ENCODE measurements at regions of chr1 and their contacts with region 1.

Region 1: DNA sequence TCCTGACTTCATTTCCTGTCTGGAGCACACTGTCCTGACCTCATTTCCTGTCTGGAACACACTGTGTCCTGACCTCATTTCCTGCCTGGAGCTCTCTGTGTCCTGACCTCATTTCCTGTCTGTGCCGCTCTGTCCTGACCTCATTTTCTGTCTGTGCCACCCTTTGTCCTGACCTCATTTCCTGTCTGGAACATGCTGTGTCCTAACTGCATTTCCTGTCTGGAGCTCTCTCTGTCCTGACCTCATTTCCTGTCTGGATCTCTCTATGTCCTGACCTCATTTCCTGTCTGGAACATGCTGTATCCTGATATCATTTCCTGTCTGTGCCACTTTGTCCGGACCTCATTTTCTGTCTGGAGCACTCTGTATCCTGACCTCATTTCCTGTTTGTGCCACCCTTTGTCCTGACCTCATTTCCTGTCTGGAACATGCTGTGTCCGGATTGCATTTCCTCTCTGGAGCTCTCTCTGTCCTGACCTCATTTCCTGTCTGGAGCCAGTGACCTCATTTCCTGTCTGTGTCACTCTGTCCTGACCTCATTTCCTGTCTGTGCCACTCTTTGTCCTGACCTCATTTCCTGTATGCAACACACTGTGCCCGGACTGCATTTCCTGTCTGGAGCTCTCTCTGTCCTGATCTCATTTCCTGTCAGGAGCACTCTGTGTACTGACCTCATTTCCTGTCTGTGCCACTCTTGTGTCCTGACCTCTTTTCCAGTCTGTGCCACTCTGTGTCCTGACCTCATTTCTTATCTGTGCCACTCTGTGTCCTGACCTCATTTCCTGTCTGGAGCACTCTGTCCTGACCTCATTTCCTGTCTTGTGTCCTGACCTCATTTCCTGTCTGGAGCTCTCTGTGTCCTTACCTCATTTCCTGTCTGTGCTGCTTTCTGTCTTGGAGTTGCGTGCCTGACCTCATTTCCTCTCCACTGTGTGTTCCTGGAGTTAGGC is 27.6 kb downstream of the SKI start:
- DNase-seq: peak; percentile 59 to 99 (median 95)
- ATAC-seq: peak; percentile 79
- H3K4me3 ChIP-seq: peak overlapping the region; percentile 0
- H3K4me3 Mint-ChIP-seq: no peak overlapping the region
- H3K27ac ChIP-seq: peak overlapping the region; percentile 98
- H3K27ac Mint-ChIP-seq: no peak overlapping the region
- H3K4me1 ChIP-seq: peaks cover 52 to 70% of the 10 kb centered on the region in 2 donors
- H3K4me1 Mint-ChIP-seq: peaks cover 27 to 62% (median 51%) of the 10 kb centered on the region in 7 donors
- H3K27me3 ChIP-seq: no peaks in the 10 kb centered on the region
- H3K27me3 Mint-ChIP-seq: no peaks in the 10 kb centered on the region

Region 2: GRCh38 chr1:2227346-2228153 is 28.1 kb before region 1 on chr1:
- CTCF ChIA-PET with region 1: interaction called, 16 read pairs
- POLR2A ChIA-PET with region 1: interaction called, 244 read pairs
- intact Hi-C with region 1: loop called (anchors 1 kb)
- DNase-seq: peak; percentile 87 to 98 (median 97)
- ATAC-seq: peak; percentile 88
- H3K4me3 ChIP-seq: peak overlapping the region; percentile 33
- H3K4me3 Mint-ChIP-seq: peak overlapping the region in 9 of 10 donors; percentile 56 to 83 (median 69)
- H3K27ac ChIP-seq: peak overlapping the region; percentile 72
- H3K27ac Mint-ChIP-seq: peak overlapping the region in 4 of 9 donors; percentile 26 to 80 (median 62)
- H3K4me1 ChIP-seq: peaks cover 5 to 14% of the 10 kb centered on the region in 2 donors
- H3K4me1 Mint-ChIP-seq: peaks cover 9 to 24% (median 17%) of the 10 kb centered on the region in 7 donors
- H3K27me3 ChIP-seq: no peaks in the 10 kb centered on the region
- H3K27me3 Mint-ChIP-seq: peaks cover 0 to 8% (median 0%) of the 10 kb centered on the region in 5 donors

Region 3: GRCh38 chr1:2240270-2241156 is 15.2 kb before region 1 on chr1:
- CTCF ChIA-PET with region 1: interaction called, 6 read pairs
- POLR2A ChIA-PET with region 1: interaction called, 244 read pairs
- intact Hi-C with region 1: no loop called
- DNase-seq: peak in 3 of 9 donors; percentile 36 to 68 (median 37)
- ATAC-seq: peak; percentile 30
- H3K4me3 ChIP-seq: peak overlapping the region; percentile 26
- H3K4me3 Mint-ChIP-seq: peak overlapping the region; percentile 40 to 98 (median 84)
- H3K27ac ChIP-seq: peak overlapping the region; percentile 59
- H3K27ac Mint-ChIP-seq: peak overlapping the region; percentile 59 to 97 (median 93)
- H3K4me1 ChIP-seq: peaks cover 47 to 84% of the 10 kb centered on the region in 2 donors
- H3K4me1 Mint-ChIP-seq: peaks cover 66 to 92% (median 83%) of the 10 kb centered on the region in 7 donors
- H3K27me3 ChIP-seq: no peaks in the 10 kb centered on the region
- H3K27me3 Mint-ChIP-seq: no peaks in the 10 kb centered on the region

Region 4: GRCh38 chr1:2290595-2291510 is 35.2 kb after region 1 on chr1:
- CTCF ChIA-PET with region 1: interaction called, 3 read pairs
- POLR2A ChIA-PET with region 1: interaction called, 20 read pairs
- intact Hi-C with region 1: loop called (anchors 1 kb)
- DNase-seq: peak; percentile 44 to 83 (median 79)
- ATAC-seq: peak; percentile 82
- H3K4me3 ChIP-seq: peak overlapping the region; percentile 52
- H3K4me3 Mint-ChIP-seq: peak overlapping the region; percentile 81 to 94 (median 88)
- H3K27ac ChIP-seq: peak overlapping the region; percentile 68
- H3K27ac Mint-ChIP-seq: peak overlapping the region; percentile 95 to 97 (median 96)
- H3K4me1 ChIP-seq: peaks cover 49 to 91% of the 10 kb centered on the region in 2 donors
- H3K4me1 Mint-ChIP-seq: peaks cover 51 to 98% (median 79%) of the 10 kb centered on the region in 7 donors
- H3K27me3 ChIP-seq: no peaks in the 10 kb centered on the region
- H3K27me3 Mint-ChIP-seq: no peaks in the 10 kb centered on the region

Region 5: DNA sequence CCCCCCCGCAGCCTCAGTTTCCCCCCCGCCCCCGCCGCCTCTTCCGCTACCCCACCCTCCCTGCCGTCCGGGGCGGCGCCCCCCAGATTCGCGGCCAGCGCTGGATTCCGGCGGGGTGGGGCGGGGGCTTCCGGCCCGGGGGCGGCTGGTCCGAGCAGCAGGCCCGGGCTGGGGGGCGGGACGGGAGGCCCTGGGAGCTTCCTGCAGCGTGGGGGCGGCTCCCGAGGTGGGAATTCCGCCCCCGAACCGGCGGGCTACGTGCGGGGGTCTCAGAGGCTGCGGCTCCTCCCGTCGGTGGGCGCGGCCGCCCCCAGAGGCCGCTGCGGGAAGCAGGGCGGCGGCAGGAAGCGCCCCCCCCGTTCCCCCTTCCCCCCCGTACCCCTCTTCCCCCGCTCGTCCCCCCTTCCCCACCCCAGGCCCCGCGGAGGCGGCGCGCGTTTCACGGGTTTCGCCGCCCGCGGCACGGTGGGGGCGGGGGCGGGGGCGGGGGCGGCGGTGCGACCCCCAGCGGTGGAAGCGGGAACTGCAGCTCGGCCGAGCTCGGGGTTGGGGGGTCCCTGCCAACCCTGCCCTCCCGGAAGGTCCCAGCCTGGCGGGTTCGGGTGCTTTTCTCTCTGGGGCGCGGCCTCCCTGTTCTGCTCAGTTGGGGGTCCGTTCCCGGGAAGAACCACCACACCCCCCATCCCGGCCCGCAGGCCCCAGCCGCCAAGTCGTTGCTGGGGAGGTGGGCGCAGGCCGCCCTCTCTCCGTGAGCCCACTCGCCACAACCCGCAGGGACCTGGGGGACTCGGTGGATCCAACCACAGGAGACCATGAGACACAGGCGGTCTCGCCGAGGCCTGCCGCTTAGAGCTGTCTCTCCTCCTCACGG is 59.3 kb after region 1 on chr1:
- CTCF ChIA-PET with region 1: interaction called, 3 read pairs
- POLR2A ChIA-PET with region 1: interaction called, 8 read pairs
- intact Hi-C with region 1: loop called in 1 of 2 experiments (anchors 2 kb)
- DNase-seq: peak; percentile 56 to 77 (median 70)
- ATAC-seq: peak; percentile 81
- H3K4me3 ChIP-seq: peak overlapping the region; percentile 55
- H3K4me3 Mint-ChIP-seq: peak overlapping the region in 9 of 10 donors; percentile 12 to 73 (median 64)
- H3K27ac ChIP-seq: peak overlapping the region; percentile 84
- H3K27ac Mint-ChIP-seq: peak overlapping the region in 8 of 9 donors; percentile 38 to 86 (median 65)
- H3K4me1 ChIP-seq: peaks cover 29 to 42% of the 10 kb centered on the region in 2 donors
- H3K4me1 Mint-ChIP-seq: peaks cover 3 to 19% (median 12%) of the 10 kb centered on the region in 7 donors
- H3K27me3 ChIP-seq: no peaks in the 10 kb centered on the region
- H3K27me3 Mint-ChIP-seq: no peaks in the 10 kb centered on the region